ENCODE measurements at regions of chr14 and their contacts with region 1.

Region 1: DNA sequence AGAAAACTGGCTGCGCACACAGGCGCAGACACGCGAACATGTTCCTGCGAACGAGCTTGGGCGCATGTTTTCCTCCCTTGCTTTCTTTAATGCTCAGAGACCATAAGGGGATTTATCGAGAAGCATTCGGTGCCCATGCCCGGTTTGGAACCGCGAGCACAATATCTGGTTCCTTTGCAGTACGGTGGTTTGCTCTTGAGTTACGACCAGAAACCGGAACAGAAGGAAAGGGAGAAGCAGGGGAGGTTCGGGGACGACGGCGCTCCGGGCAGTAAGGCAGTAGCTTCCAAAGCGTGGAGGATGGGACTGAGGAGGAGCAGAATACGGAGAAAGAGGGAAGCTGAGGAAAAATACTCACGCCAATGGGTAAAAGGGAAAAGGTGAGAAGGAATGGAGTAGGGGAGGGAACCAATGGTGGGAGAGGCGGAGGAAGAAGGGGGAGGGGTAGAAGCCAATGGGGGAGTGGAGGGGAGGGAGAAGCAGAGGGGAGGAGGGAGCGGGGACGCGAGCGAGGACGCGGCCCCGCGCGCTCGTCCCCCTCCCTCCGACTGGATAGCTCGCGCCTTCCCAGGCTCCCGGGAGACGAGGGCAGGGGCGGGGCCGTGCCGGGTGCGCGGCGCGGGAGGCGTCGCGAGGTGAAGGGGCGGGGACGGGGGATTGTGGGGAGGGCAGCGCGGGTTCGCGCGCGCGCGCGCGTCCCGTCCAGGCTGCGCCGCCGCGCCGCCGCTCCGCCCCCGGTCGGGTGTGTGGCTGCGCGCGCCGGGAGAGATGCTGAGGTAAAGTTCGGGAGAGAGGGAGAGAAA is 625 bp upstream of the ARHGAP5 start:
- DNase-seq: peak; percentile 97 to 98
- H3K4me3 ChIP-seq: peak overlapping the region; percentile 43 to 99 (median 96)
- H3K27ac ChIP-seq: peak overlapping the region; percentile 99 to 100 (median 99)
- H3K4me1 ChIP-seq: peaks cover 0 to 10% of the 10 kb centered on the region in 2 donors
- H3K27me3 ChIP-seq: no peaks in the 10 kb centered on the region
- CTCF ChIP-seq: peak in 1 of 6 experiments; percentile 13
- POLR2A ChIP-seq: peak; percentile 64 to 77

Region 2: GRCh38 chr14:32202998-32203882 is 126.8 kb after region 1 on chr14 and contains the start of gene RNU6-8:
- intact Hi-C with region 1: loop called (anchors 5 kb)
- DNase-seq: peak; percentile 93 to 94
- H3K4me3 ChIP-seq: peak within 1 kb of the TSS; percentile 36 to 75 (median 59)
- H3K27ac ChIP-seq: peak within 1 kb of the TSS; percentile 87 to 92 (median 90)
- H3K4me1 ChIP-seq: peaks cover 0 to 12% of the 10 kb centered on the region in 2 donors
- H3K27me3 ChIP-seq: no peaks in the 10 kb centered on the region
- CTCF ChIP-seq: peak in 1 of 6 experiments; percentile 4
- POLR2A ChIP-seq: peak; percentile 50 to 72
- total RNA-seq, gene RNU6-8: not detected

Region 3: GRCh38 chr14:32469388-32470160 is 393.1 kb after region 1 on chr14:
- intact Hi-C with region 1: loop called (anchors 10 kb)
- DNase-seq: no peak
- H3K4me3 ChIP-seq: no peak overlapping the region
- H3K27ac ChIP-seq: no peak overlapping the region
- H3K4me1 ChIP-seq: peaks cover 11 to 18% of the 10 kb centered on the region in 2 donors
- H3K27me3 ChIP-seq: no peaks in the 10 kb centered on the region
- CTCF ChIP-seq: peak in 5 of 6 experiments; percentile 40 to 86 (median 45)
- POLR2A ChIP-seq: no peak

Measured in thyroid gland (tissue), 4 donors.